Activated CD8-positive, alpha-beta T cell treated with anti-CD3 and anti-CD28 coated beads, Interleukin-2, amount 10 ng/mL, durations not matched to agents 7 days and 5 days (primary cell): ENCODE measurements at regions of chr14 and their contacts with region 1.

Region 1: GRCh38 chr14:73771848-73772638 is 57.9 kb upstream of the PNMA1 start:
- DNase-seq: peak; percentile 76
- ATAC-seq: peak; percentile 82
- H3K4me3 Mint-ChIP-seq: peak overlapping the region; percentile 34
- H3K27ac Mint-ChIP-seq: peak overlapping the region; percentile 77
- H3K4me1 Mint-ChIP-seq: peaks cover 71% of the 10 kb centered on the region
- H3K27me3 Mint-ChIP-seq: no peaks in the 10 kb centered on the region

Region 2: DNA sequence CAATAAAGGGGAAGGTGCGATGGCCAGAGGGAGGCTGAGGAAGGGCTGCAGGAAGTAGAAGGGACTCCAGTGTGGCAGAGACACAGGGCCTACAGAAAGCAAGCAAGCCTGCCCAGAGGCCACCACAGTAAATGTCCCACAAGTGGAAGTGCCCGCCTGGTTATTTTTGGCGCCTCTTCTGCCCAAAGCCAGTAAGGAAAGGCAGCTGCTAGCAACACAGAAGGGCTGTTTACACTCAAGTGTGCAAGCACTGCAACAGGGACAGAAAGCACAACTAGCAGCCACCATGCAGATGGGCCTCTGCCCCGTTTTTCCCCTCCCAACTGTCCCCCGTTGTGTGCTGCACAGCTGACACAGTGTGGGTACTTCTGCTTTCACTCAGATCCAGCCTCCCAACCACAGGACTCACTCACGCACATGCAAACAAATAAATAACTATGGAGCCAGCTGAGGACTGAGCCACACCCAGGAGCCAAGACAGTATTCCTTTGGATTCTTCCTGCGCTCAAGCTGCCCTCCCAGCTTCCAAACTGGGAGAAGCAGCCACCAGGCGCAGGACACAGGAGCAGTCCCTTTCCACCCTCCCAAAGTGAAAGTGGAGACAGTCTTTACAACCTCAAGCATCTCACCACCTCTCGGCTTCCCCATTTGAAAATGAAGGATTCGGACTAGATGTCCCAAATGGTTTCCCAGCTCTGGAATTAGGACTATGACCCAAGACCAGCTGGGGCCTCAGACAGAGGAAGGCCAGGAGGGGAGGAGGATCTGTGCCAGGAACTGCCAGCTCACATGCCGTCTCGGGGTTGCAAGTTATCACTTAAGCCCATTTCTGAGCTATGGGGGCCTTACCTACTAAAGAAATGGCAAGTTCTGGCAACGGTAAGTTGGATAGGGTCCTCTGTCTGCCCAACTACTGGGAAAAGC is 17.8 kb before region 1 on chr14:
- CTCF ChIA-PET with region 1: interaction called, 36 read pairs
- POLR2A ChIA-PET with region 1: interaction called, 68 read pairs
- DNase-seq: peak; percentile 73
- ATAC-seq: peak; percentile 42
- H3K4me3 Mint-ChIP-seq: peak overlapping the region; percentile 91
- H3K27ac Mint-ChIP-seq: peak overlapping the region; percentile 90
- H3K4me1 Mint-ChIP-seq: peaks cover 89% of the 10 kb centered on the region
- H3K27me3 Mint-ChIP-seq: no peaks in the 10 kb centered on the region

Region 3: GRCh38 chr14:73842851-73843250 is 70.8 kb after region 1 on chr14:
- CTCF ChIA-PET with region 1: no interaction called
- POLR2A ChIA-PET with region 1: no interaction called
- DNase-seq: no peak
- ATAC-seq: no peak
- H3K4me3 Mint-ChIP-seq: no peak overlapping the region
- H3K27ac Mint-ChIP-seq: no peak overlapping the region
- H3K4me1 Mint-ChIP-seq: no peaks in the 10 kb centered on the region
- H3K27me3 Mint-ChIP-seq: peaks cover 4% of the 10 kb centered on the region

Region 4: GRCh38 chr14:73878436-73878835 is 106.4 kb after region 1 on chr14:
- CTCF ChIA-PET with region 1: no interaction called
- POLR2A ChIA-PET with region 1: no interaction called
- DNase-seq: no peak
- ATAC-seq: no peak
- H3K4me3 Mint-ChIP-seq: no peak overlapping the region
- H3K27ac Mint-ChIP-seq: no peak overlapping the region
- H3K4me1 Mint-ChIP-seq: peaks cover 15% of the 10 kb centered on the region
- H3K27me3 Mint-ChIP-seq: no peaks in the 10 kb centered on the region